K562 (cell line): ENCODE measurements at regions of chr9 and their contacts with region 1.

Region 1: DNA sequence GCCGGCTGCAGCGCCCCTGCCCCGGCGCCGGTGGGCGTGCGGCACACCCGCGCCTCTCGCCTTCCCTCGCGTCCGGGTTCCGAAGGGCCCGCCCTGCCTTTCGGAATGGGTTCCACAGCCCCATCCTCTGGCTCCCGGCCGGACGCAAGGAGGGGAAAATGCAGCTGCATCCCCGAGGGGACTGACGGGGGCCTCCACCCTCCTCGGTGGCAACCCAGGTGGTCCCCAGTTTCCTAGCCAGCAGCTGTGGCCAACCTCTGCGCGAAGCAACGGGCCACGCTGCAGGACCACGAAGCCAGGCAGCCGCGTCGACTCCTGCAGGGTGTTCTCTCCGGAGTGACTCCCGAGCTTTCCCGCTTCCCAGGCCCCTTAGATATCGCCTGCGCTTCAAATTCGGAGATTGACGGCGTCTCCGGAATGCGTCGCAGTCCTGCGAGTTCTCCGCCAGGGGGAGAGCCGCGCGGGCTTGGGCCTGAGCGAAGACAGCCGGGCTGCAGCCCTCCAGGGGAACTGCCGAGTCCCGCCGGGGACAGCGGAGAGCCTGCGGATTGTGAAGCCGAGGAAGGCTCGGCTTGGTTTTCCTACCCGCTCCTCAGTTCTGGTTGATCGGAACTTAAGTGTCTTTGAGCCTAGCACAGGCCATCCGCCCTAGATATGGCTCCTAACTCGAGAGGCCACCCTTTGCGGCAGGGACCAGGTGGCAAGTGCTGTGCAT is 582 bp upstream of the APBA1 start:
- DNase-seq: peak; percentile 56 to 76 (median 62)
- ATAC-seq: peak; percentile 99
- H3K4me3 ChIP-seq: peak overlapping the region; percentile 35
- H3K27ac ChIP-seq: no peak overlapping the region
- H3K4me1 ChIP-seq: peaks cover 0 to 15% of the 10 kb centered on the region in 2 experiments; a peak in 2 of 5 replicates
- H3K27me3 ChIP-seq: peaks cover 2 to 15% of the 10 kb centered on the region in 2 experiments; a peak in 4 of 5 replicates
- CTCF ChIP-seq: peak; percentile 70 to 87 (median 72)
- EP300 ChIP-seq: no peak
- POLR2A ChIP-seq: no peak
- RAD21 ChIP-seq: peak; percentile 44 to 72

Region 2: DNA sequence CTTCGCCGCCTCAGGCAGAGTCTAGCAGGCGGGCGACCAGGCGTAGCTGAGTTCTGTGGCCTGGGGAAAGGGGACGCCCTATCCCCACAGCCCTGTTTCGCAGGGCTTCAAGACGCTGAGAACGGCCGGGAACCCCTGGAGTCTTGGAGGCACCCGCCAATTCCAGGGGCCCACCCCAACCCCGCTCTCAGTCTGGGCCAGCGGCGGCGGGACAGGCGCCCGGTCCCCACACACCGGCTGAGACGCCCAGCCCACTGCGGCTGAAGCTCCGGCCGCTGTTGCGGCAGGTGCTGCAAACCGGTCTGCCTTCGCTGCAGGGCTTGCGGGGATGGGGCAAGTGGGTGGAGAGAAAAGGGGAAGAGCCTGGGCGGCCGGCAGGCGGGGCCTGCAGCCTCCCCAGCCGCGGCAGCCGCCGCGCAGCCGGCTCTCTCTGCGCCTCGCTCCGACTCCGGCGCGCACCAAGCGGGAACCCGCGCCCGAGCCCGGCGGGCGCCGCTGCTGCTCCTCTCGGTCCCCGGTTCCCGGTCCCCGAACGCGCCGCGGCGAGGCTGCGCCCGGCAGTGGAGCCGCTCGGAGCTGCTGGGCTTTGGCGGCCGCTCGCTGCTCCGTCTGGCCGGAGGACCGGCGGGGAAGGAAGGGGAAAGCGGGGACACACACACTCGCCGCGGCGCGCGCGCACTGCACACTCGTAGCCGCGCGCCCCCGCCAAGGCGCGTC is 967.8 kb before region 1 on chr9 and contains the start of gene PIP5K1B:
- CTCF ChIA-PET with region 1: no interaction called
- POLR2A ChIA-PET with region 1: no interaction called
- in situ Hi-C with region 1: no loop called
- intact Hi-C with region 1: no loop called
- DNase-seq: peak; percentile 69 to 84 (median 76)
- ATAC-seq: peak; percentile 92
- H3K4me3 ChIP-seq: peak within 1 kb of the TSS; percentile 75
- H3K27ac ChIP-seq: peak within 1 kb of the TSS; percentile 77
- H3K4me1 ChIP-seq: peaks cover 19 to 21% of the 10 kb centered on the region in 2 experiments; a peak in 4 of 5 replicates
- H3K27me3 ChIP-seq: no peaks in the 10 kb centered on the region
- CTCF ChIP-seq: peak in 1 of 3 experiments; percentile 30; a peak in 1 of 6 replicates
- EP300 ChIP-seq: no peak
- POLR2A ChIP-seq: peak; percentile 59
- RAD21 ChIP-seq: peak in 1 of 2 experiments; percentile 9; a peak in 2 of 4 replicates
- polyA plus RNA-seq, gene PIP5K1B: 3.1 to 6.3 TPM

Region 3: GRCh38 chr9:69759421-69760277 is 86.9 kb after region 1 on chr9 and contains the start of gene PTAR1:
- CTCF ChIA-PET with region 1: interaction called, 3 read pairs
- POLR2A ChIA-PET with region 1: no interaction called
- in situ Hi-C with region 1: no loop called
- intact Hi-C with region 1: loop called (anchors 5 kb)
- DNase-seq: peak; percentile 71 to 92 (median 76)
- ATAC-seq: peak; percentile 89
- H3K4me3 ChIP-seq: peak within 1 kb of the TSS; percentile 71
- H3K27ac ChIP-seq: peak within 1 kb of the TSS; percentile 88
- H3K4me1 ChIP-seq: peaks cover 0 to 4% of the 10 kb centered on the region in 2 experiments; a peak in 4 of 5 replicates
- H3K27me3 ChIP-seq: no peaks in the 10 kb centered on the region
- CTCF ChIP-seq: no peak
- EP300 ChIP-seq: no peak
- POLR2A ChIP-seq: peak; percentile 86
- RAD21 ChIP-seq: no peak
- polyA plus RNA-seq, gene PTAR1: 10.1 to 10.8 TPM

Region 4: GRCh38 chr9:69822091-69822750 is 149.5 kb after region 1 on chr9:
- CTCF ChIA-PET with region 1: no interaction called
- POLR2A ChIA-PET with region 1: no interaction called
- in situ Hi-C with region 1: no loop called
- intact Hi-C with region 1: loop called (anchors 5 kb)
- DNase-seq: peak in 2 of 4 experiments; percentile 10 to 13
- ATAC-seq: peak; percentile 26; the same call in 1 of the 3 replicates
- H3K4me3 ChIP-seq: no peak overlapping the region
- H3K27ac ChIP-seq: no peak overlapping the region
- H3K4me1 ChIP-seq: no peaks in the 10 kb centered on the region; a peak in 1 of 5 replicates
- H3K27me3 ChIP-seq: no peaks in the 10 kb centered on the region
- CTCF ChIP-seq: peak; percentile 7 to 27 (median 16); a peak in 2 of 6 replicates
- EP300 ChIP-seq: no peak
- POLR2A ChIP-seq: no peak
- RAD21 ChIP-seq: peak in 1 of 2 experiments; percentile 47; a peak in 2 of 4 replicates

Region 5: DNA sequence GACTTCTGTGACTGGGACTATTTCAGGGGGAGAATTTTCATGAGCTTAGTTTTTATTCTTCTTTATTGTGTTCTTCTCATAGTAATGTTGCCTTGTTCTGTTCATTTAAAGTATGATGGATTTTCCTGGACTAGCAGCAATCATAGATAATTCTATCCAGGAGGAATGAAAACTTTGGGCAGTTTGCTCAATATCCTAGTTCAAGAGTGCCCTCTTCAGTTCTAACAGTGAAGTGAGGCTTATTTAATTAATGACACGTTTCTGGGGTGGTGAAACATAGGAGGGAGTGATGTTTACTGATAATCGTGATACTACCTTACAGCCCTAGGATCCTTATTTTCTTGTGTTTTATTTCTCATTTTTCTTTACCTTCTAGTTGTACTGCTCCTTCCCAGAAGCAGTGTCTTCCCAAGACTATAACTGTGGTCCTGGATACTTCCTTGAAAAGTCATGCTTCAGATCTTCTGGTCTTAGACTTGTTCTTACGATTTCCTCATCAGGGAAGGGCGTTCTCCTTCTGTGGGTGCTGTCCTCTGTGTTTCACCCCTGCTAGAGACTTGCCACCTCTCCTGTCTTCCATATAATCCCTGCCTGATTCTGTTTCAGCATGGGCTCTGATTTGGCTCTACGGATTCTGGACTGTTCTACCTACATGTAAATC is 205.2 kb after region 1 on chr9:
- CTCF ChIA-PET with region 1: interaction called, 5 read pairs
- POLR2A ChIA-PET with region 1: no interaction called
- in situ Hi-C with region 1: no loop called
- intact Hi-C with region 1: loop called (anchors 5 kb)
- DNase-seq: peak in 2 of 4 experiments; percentile 10 to 24
- ATAC-seq: peak; percentile 53; the same call in 2 of the 3 replicates
- H3K4me3 ChIP-seq: no peak overlapping the region
- H3K27ac ChIP-seq: no peak overlapping the region
- H3K4me1 ChIP-seq: no peaks in the 10 kb centered on the region
- H3K27me3 ChIP-seq: no peaks in the 10 kb centered on the region
- CTCF ChIP-seq: peak; percentile 17 to 61 (median 51); a peak in 5 of 6 replicates
- EP300 ChIP-seq: no peak
- POLR2A ChIP-seq: no peak
- RAD21 ChIP-seq: peak; percentile 41 to 70

Region 6: DNA sequence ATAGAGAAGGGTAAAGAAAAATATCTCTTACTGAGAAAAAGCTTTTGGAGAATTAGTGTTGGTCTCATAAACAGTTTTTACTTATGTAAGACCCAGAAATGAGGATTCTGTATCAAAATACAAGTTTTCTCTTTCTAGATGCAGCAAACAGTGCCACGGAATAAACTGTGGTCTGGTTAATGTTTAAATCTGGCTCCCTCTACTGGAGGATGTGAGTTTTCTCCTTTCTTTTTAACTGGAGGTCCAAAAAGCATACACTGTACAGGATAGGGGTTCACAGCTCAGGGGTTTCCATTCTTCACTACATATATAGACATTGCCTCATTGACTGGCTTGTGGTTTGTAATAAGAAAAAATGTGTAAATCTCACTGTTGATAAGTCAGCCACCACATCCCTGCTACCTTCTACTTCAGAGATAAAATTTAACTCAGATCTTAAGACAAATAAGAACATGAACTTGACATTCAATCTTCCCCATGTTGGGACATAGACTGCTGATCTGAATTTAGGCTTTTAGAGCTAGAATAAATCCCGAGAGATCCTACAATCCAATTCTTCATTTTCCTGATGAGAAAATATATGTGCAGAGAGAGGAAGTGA is 246.8 kb after region 1 on chr9:
- CTCF ChIA-PET with region 1: no interaction called
- POLR2A ChIA-PET with region 1: no interaction called
- in situ Hi-C with region 1: no loop called
- intact Hi-C with region 1: loop called (anchors 1 kb)
- DNase-seq: peak; percentile 21 to 41 (median 30)
- ATAC-seq: peak; percentile 83
- H3K4me3 ChIP-seq: no peak overlapping the region
- H3K27ac ChIP-seq: no peak overlapping the region
- H3K4me1 ChIP-seq: no peaks in the 10 kb centered on the region
- H3K27me3 ChIP-seq: peaks cover 0 to 5% of the 10 kb centered on the region in 2 experiments; a peak in 1 of 5 replicates
- CTCF ChIP-seq: peak; percentile 48 to 60 (median 59); a peak in 5 of 6 replicates
- EP300 ChIP-seq: no peak
- POLR2A ChIP-seq: no peak
- RAD21 ChIP-seq: peak; percentile 40 to 64